Left ventricle myocardium superior (tissue), 1 donor: ENCODE measurements at regions of chr6 and their contacts with region 1.

Region 1: DNA sequence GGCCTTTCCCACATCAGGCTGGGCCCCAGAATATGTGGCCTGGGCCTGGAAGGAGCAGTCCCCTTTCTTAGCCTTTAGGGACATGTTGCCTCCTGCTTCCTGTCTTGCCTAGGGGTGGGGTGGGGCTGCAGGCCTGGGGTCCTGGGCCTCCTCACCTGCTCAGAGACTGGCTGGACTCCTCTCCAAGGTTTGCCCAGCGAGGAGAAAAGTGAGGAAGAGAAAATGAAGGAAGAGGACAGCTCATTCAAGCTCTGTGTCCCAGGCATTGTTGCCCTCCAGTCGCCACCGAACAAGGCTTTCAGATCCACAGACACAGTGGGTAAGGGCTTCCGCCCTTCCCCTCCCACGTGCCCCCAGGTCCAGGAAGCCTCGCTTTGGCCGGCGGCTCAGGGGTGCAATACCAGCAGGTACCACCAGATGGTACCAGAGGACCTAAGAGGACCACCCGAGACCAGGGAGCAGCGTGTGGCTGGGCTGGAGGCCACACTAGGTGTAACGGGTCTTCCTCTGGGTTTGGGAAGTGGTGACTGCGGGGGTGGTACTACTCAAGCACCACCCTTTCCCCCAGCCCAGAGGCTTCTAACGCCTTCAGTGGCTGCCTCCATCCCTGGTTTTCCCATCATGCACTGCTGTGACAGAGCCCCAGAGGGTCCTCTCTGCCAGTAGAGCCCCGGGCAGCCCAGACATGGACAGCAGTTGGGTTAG is 5.5 kb upstream of the BAK1 start:
- DNase-seq: peak; percentile 87
- ATAC-seq: peak; percentile 64

Region 2: GRCh38 chr6:33633462-33634158 is 48.1 kb after region 1 on chr6:
- intact Hi-C with region 1: loop called (anchors 5 kb)
- DNase-seq: peak; percentile 85
- ATAC-seq: peak; percentile 87

Region 3: DNA sequence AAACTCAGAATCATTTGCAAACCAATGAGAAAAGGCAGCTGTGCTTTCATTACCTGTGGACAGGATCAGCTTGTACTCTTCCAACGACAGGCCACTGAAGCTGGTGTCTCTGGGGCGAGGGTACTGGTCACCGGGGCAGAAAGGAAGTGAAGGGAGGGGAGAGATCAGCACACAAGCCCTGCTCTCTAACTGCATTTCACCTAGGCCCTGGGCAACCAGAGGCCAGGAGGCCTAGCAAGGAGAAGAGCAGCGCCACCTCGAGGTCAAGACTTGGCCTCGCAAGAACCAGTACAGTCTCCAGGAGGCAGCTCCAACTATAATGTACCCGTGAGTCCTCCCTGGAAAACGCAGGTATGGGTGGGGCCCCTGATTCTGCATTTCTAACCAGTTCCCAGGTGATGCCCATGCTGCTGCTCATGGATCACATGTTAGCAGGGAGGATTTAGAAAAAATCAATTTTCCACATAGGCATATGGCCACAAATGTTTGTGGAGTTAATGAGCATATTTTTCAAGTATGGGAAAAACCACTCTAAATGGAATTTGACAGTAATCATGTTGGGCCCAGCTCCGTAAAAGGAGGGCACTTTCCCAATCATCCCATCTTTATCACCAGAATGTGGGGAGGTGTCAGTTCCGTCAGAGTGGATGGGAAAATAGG is 115.0 kb after region 1 on chr6:
- intact Hi-C with region 1: loop called (anchors 5 kb)
- DNase-seq: peak; percentile 74
- ATAC-seq: peak; percentile 26

Region 4: DNA sequence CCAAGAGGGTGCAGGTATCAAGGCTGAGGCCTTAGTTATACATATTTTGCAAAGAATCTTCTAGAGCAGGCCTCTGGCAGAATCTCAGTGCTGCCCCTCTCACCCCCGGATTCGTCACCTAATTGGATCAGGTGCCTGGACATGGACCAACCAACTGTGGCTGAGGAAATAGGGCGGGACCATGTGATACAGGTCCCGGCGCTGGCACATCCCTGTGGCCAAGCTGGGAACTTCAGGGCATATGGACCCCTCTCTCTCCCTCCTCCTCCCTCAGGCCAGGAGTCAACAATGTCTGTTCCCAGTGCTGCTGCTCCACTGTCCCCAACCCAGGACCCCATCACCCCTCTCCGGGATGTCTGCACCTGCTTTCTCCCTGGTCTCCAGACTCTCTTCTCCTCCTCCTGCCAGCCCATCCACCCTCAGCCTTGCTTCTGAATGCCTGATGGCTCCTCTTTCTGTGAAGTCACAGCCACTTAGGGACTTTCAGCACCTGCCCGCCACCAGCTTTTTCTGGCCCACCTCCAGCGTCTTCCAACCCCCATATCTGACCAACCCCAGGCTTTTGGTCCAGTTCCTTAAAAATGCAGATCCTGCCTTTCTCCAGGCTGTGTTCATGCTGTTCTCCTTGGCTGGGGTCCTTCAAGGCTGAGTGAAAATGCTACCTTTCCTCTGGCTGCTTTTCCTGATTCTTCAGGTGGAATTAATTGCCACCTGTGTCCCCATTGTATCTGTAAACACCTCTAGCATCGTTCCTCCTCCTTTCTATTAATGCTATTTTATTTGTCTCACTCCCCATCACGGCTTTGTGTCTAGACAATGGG is 237.2 kb after region 1 on chr6:
- intact Hi-C with region 1: no loop called
- DNase-seq: peak; percentile 6
- ATAC-seq: no peak